ENCODE measurements at regions of chr9 and their contacts with region 1.

Region 1: GRCh38 chr9:18393340-18394130 is 80.4 kb upstream of the ADAMTSL1 start:
- DNase-seq: peak; percentile 98
- H3K4me3 ChIP-seq: no peak overlapping the region
- H3K27ac ChIP-seq: peak overlapping the region; percentile 98
- H3K4me1 ChIP-seq: peaks cover 44% of the 10 kb centered on the region
- H3K27me3 ChIP-seq: no peaks in the 10 kb centered on the region
- CTCF ChIP-seq: no peak
- POLR2A ChIP-seq: no peak

Region 2: GRCh38 chr9:18238254-18238653 is 155.3 kb before region 1 on chr9:
- CTCF ChIA-PET with region 1: interaction called, 4 read pairs
- POLR2A ChIA-PET with region 1: no interaction called
- dilution Hi-C with region 1: no loop called
- intact Hi-C with region 1: loop called (anchors 1 kb)
- DNase-seq: peak; percentile 97
- H3K4me3 ChIP-seq: peak overlapping the region in 1 of 3 experiments; percentile 27
- H3K27ac ChIP-seq: peak overlapping the region; percentile 93
- H3K4me1 ChIP-seq: peaks cover 43% of the 10 kb centered on the region
- H3K27me3 ChIP-seq: no peaks in the 10 kb centered on the region
- CTCF ChIP-seq: no peak
- POLR2A ChIP-seq: no peak

Region 3: DNA sequence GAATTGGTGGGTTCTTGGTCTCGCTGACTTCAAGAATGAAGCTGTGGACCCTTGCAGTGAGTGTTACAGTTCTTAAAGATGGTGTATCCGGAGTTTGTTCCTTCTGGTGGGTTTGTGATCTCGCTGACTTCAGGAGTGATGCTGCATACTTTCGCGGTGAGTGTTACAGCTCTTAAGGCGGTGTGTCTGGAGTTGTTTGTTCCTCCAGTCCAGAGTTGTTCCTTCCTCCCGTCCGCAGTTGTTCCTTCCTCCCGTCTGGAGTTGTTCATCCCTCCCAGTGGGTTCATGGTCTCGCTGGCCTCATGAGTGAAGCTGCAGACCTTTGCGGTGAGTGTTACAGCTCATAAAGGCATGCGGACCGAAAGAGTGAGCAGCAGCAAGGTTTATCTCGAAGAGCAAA is 79.2 kb before region 1 on chr9:
- CTCF ChIA-PET with region 1: interaction called, 10 read pairs
- POLR2A ChIA-PET with region 1: no interaction called
- dilution Hi-C with region 1: no loop called
- intact Hi-C with region 1: loop called (anchors 1 kb)
- DNase-seq: peak; percentile 50
- H3K4me3 ChIP-seq: no peak overlapping the region
- H3K27ac ChIP-seq: peak overlapping the region; percentile 18
- H3K4me1 ChIP-seq: no peaks in the 10 kb centered on the region
- H3K27me3 ChIP-seq: no peaks in the 10 kb centered on the region
- CTCF ChIP-seq: no peak
- POLR2A ChIP-seq: peak; percentile 21

Region 4: GRCh38 chr9:18331808-18332209 is 61.7 kb before region 1 on chr9:
- CTCF ChIA-PET with region 1: interaction called, 11 read pairs
- POLR2A ChIA-PET with region 1: no interaction called
- dilution Hi-C with region 1: no loop called
- intact Hi-C with region 1: loop called (anchors 1 kb)
- DNase-seq: peak; percentile 99
- H3K4me3 ChIP-seq: no peak overlapping the region
- H3K27ac ChIP-seq: peak overlapping the region; percentile 85
- H3K4me1 ChIP-seq: peaks cover 40% of the 10 kb centered on the region
- H3K27me3 ChIP-seq: no peaks in the 10 kb centered on the region
- CTCF ChIP-seq: no peak
- POLR2A ChIP-seq: peak; percentile 57

Region 5: GRCh38 chr9:18352716-18353115 is 40.8 kb before region 1 on chr9:
- CTCF ChIA-PET with region 1: no interaction called
- POLR2A ChIA-PET with region 1: no interaction called
- dilution Hi-C with region 1: no loop called
- intact Hi-C with region 1: no loop called
- DNase-seq: no peak
- H3K4me3 ChIP-seq: no peak overlapping the region
- H3K27ac ChIP-seq: no peak overlapping the region
- H3K4me1 ChIP-seq: peaks cover 5% of the 10 kb centered on the region
- H3K27me3 ChIP-seq: no peaks in the 10 kb centered on the region
- CTCF ChIP-seq: no peak
- POLR2A ChIP-seq: no peak

Region 6: GRCh38 chr9:18379073-18379811 is 14.3 kb before region 1 on chr9:
- CTCF ChIA-PET with region 1: interaction called, 5 read pairs
- POLR2A ChIA-PET with region 1: interaction called, 4 read pairs
- dilution Hi-C with region 1: no loop called
- intact Hi-C with region 1: loop called (anchors 2 kb)
- DNase-seq: peak; percentile 70
- H3K4me3 ChIP-seq: no peak overlapping the region
- H3K27ac ChIP-seq: no peak overlapping the region
- H3K4me1 ChIP-seq: peaks cover 3% of the 10 kb centered on the region
- H3K27me3 ChIP-seq: no peaks in the 10 kb centered on the region
- CTCF ChIP-seq: no peak
- POLR2A ChIP-seq: no peak

Region 7: GRCh38 chr9:18658764-18659705 is 265.5 kb after region 1 on chr9:
- CTCF ChIA-PET with region 1: no interaction called
- POLR2A ChIA-PET with region 1: no interaction called
- dilution Hi-C with region 1: no loop called
- intact Hi-C with region 1: loop called (anchors 1 kb)
- DNase-seq: peak; percentile 71
- H3K4me3 ChIP-seq: no peak overlapping the region
- H3K27ac ChIP-seq: peak overlapping the region; percentile 57
- H3K4me1 ChIP-seq: peaks cover 12% of the 10 kb centered on the region
- H3K27me3 ChIP-seq: no peaks in the 10 kb centered on the region
- CTCF ChIP-seq: no peak
- POLR2A ChIP-seq: no peak